ENCODE measurements at regions of chr1 and their contacts with region 1.

Region 1: GRCh38 chr1:10032590-10033358 is at the start of gene UBE4B:
- DNase-seq: peak; percentile 99
- ATAC-seq: peak; percentile 100
- total RNA-seq, gene UBE4B: 42.9 to 47.8 TPM

Region 2: GRCh38 chr1:9957726-9958125 is 75.0 kb before region 1 on chr1:
- intact Hi-C with region 1: loop called in 1 of 2 experiments (anchors 10 kb)
- DNase-seq: no peak
- ATAC-seq: no peak